Cardiac septum (tissue), 1 donor: ENCODE measurements at regions of chr15 and their contacts with region 1.

Region 1: DNA sequence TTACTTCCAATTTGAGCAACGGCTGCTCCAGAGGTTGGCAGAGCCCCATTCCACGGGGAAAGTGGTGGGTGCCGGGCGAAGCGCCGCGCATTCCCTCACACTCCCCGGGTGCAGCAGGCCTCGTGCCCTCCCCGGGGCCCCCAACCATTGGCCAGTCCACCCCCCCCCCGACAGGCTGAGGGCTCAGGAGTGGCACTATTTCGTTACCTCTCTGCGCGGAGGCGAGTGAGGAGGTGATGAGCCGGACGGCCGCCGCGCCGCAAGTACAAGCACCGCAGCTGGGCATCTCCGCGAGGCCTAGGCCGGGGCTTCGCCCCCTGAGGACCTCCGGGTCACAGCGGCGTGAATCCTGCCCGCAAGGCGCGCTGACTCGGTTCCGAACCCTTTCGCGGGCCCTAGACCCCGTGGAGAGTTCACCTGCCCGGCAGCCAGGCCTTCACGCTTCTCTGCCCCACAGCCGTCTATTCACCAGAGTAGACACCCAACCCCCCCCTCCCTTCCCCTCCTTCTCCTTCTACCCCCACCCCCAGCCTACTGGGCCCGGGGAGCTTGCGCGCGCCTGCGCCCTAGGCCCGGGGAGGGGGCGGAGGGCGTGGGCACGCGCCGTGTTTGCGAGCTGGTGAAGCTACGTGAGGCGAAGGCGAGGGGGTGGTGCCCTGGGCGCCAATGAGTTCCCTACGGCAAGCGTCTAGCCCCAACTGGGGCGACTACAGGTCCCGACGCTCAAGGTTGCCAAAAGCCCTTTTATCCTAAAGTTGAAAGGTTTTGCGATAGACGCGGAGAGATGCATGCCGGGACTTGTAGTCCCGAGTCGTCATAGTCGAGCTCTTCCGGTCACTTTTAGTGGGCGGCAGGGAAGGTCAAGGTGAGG is at the start of gene CLPX:
- DNase-seq: peak; percentile 95
- total RNA-seq, gene CLPX: 55.9 TPM

Region 2: GRCh38 chr15:65133548-65134200 is 51.4 kb before region 1 on chr15 and contains the start of gene PDCD7:
- intact Hi-C with region 1: loop called (anchors 2 kb)
- DNase-seq: peak; percentile 89
- total RNA-seq, gene PDCD7: 17.4 TPM

Region 3: GRCh38 chr15:65245096-65245856 is 60.2 kb after region 1 on chr15:
- intact Hi-C with region 1: no loop called
- DNase-seq: peak; percentile 78

Region 4: DNA sequence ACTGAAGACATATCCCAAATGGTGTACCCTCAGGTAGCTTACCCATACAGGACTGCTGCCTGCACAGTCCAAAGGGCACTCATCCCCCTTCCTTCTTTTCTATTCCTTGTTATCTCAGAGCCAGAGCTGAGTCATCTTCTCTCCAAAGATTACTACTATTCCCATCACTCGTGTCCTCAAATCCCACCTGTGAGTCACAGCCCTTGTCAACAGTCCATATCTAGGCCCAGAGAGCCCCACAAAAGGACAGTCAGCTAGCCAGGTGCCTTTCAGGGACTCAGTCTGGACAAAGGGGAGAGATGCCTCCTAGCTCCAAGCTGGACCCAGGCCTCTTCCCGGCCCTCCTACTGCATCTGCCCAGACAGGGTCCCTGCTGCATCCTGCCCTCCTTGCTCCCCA is 90.6 kb after region 1 on chr15:
- intact Hi-C with region 1: loop called (anchors 2 kb)
- DNase-seq: no peak

Region 5: GRCh38 chr15:65286704-65287519 is 101.8 kb after region 1 on chr15 and contains the start of gene PARP16:
- intact Hi-C with region 1: loop called (anchors 5 kb)
- DNase-seq: peak; percentile 98
- total RNA-seq, gene PARP16: 4.7 TPM

Region 6: DNA sequence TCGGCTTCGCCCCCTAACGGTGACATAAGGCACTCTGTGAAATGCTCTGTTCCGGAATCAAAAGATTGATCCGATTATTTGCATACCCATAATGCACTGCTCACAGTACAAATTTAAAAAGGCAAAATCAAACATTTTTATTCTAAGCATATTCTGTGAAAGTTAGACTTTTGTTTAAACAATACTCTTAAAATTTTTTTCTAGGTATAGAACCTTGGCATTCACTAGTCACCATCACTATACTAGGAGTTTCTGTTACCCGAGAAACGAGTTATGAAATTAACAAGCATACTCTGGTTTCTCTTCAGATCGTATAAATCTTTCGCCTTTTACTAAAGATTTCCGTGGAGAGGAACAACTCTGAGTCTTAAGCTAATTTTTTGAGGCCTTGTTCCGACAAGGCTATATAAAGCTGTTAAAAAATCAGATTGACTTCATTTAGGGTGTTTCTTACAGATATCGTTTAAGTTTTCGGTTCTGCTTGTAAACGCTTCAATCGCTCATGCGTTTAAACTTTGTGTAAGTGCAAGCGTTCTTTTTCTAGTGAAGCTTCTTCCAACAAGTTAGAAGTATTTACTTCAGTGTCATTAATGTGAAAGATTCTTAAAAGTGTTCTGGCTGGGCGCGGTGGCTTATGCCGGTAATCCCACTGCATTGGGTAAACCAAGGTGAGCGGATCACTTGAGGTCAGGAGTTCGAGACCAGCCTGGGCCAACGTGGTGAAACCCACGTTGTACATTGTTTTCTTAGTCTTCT is 119.5 kb after region 1 on chr15 and contains the start of gene RNU5B-1:
- intact Hi-C with region 1: loop called (anchors 5 kb)
- DNase-seq: no peak
- total RNA-seq, gene RNU5B-1: 29.8 TPM